HepG2 (cell line): ENCODE measurements at regions of chr7 and their contacts with region 1.

Region 1: GRCh38 chr7:76393116-76394031 is 16.1 kb downstream of the SSC4D start:
- DNase-seq: peak; percentile 89
- ATAC-seq: peak; percentile 81
- H3K4me3 ChIP-seq: peak overlapping the region; percentile 56 to 79 (median 68); a peak in 5 of 6 replicates
- H3K27ac ChIP-seq: peak overlapping the region; percentile 84
- H3K4me1 ChIP-seq: peaks cover 55% of the 10 kb centered on the region
- H3K27me3 ChIP-seq: no peaks in the 10 kb centered on the region
- CTCF ChIP-seq: peak; percentile 32
- EP300 ChIP-seq: 0 out of 4 replicates have a peak, but pooled peaks of 1 of the 2 experiments have one; percentile 14
- POLR2A ChIP-seq: peak; percentile 54 to 91
- RAD21 ChIP-seq: peak; percentile 61

Region 2: GRCh38 chr7:76359111-76359978 is 34.0 kb before region 1 on chr7:
- CTCF ChIA-PET with region 1: no interaction called
- POLR2A ChIA-PET with region 1: interaction called, 15 read pairs
- in situ Hi-C with region 1: no loop called
- intact Hi-C with region 1: no loop called
- DNase-seq: peak; percentile 97
- ATAC-seq: peak; percentile 93
- H3K4me3 ChIP-seq: peak overlapping the region; percentile 92 to 99 (median 94)
- H3K27ac ChIP-seq: peak overlapping the region; percentile 93
- H3K4me1 ChIP-seq: peaks cover 47% of the 10 kb centered on the region
- H3K27me3 ChIP-seq: no peaks in the 10 kb centered on the region; a peak in 1 of 5 replicates
- CTCF ChIP-seq: peak; percentile 95
- EP300 ChIP-seq: peak; percentile 50 to 69; a peak in 3 of 4 replicates
- POLR2A ChIP-seq: peak; percentile 70 to 84
- RAD21 ChIP-seq: peak; percentile 83